ENCODE measurements at regions of chr1 and their contacts with region 1.

Region 1: DNA sequence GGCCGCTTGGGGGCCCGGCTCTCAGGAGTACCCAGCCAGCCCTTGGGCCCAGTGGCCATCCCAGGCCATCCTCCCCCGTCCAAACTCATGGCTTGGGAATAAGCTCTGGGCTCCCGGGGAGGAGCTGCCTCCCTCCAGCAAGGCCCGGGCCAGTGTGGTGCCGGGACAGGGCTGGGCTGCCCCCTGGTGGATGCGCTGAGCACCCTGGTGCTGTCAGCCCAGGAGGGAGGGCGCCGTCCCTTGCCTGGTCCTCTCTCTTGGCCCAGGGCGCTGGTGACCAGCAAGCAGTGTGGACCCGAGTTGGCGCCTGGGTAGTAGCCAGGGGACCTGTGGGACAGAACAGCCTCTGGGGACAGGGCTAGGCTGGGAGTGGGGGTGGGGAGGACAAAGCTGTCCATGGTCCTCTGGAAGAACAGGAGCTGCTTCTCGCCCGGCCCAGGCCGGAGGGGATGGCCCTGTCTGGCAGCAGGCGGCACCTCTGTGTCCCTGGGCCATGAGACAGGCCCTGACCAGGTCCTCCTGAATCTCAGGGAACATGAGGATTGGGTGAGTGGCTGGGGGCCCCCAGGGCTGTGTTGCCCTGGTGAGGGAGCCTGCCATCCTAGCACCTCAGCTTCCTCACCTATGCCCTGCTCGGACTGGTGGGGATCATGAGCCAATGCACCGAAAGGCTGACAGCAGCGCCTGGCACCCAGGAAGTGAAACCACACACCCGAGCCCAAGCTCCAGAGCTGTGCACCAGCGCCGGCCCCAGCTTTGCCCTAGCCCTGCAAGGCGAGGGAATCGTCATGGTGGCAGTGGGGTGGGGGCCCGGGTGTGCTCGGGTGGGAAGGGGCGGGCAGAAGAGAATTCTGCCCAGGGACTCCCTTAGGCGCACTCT is 9.4 kb downstream of the MORN1 start:
- DNase-seq: peak; percentile 29 to 91
- H3K4me3 ChIP-seq: no peak overlapping the region
- H3K27ac ChIP-seq: peak overlapping the region; percentile 32 to 51
- H3K4me1 ChIP-seq: peaks cover 10 to 11% of the 10 kb centered on the region in 2 donors
- H3K27me3 ChIP-seq: no peaks in the 10 kb centered on the region
- CTCF ChIP-seq: peak; percentile 96 to 99 (median 99)

Region 2: DNA sequence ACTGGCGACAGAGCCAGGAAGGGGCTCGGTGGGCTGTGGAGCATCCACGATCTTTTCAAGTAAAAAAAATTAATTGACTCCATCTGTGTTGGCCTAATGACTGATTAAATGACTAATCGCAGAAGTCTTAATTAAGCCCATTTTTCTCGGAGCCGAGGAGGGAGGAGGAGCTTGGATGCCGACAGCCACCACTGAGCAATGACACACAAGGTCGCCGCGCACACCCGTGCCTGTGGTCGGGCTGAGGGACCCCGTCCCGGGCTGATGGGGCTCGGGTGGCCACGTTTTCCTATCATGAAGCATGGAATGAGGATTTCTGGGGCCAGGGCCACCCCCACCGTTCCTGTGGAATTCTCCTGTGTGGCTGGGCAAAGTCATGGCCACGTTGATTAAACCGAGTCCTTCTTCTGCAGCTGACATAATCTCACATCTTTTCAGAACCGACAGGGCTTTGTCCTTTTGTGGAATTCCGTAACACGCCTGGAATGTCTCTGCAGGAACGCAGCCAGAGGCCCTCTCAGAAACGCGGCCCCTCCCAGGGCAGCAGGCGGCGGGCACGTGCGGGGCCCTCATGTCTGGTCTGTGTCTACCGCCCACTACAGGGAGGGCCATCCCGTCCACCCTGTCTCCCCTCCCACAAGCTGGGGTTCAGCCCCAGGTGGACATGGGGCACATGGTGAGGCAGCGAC is 51.3 kb before region 1 on chr1:
- intact Hi-C with region 1: loop called (anchors 2 kb)
- DNase-seq: peak in 1 of 2 donors; percentile 84
- H3K4me3 ChIP-seq: peak overlapping the region in 1 of 2 donors; percentile 13
- H3K27ac ChIP-seq: peak overlapping the region; percentile 58 to 74
- H3K4me1 ChIP-seq: peaks cover 8 to 16% of the 10 kb centered on the region in 2 donors
- H3K27me3 ChIP-seq: no peaks in the 10 kb centered on the region
- CTCF ChIP-seq: no peak